AG04450 (cell line): ENCODE measurements at regions of chr1 and their contacts with region 1.

Region 1: DNA sequence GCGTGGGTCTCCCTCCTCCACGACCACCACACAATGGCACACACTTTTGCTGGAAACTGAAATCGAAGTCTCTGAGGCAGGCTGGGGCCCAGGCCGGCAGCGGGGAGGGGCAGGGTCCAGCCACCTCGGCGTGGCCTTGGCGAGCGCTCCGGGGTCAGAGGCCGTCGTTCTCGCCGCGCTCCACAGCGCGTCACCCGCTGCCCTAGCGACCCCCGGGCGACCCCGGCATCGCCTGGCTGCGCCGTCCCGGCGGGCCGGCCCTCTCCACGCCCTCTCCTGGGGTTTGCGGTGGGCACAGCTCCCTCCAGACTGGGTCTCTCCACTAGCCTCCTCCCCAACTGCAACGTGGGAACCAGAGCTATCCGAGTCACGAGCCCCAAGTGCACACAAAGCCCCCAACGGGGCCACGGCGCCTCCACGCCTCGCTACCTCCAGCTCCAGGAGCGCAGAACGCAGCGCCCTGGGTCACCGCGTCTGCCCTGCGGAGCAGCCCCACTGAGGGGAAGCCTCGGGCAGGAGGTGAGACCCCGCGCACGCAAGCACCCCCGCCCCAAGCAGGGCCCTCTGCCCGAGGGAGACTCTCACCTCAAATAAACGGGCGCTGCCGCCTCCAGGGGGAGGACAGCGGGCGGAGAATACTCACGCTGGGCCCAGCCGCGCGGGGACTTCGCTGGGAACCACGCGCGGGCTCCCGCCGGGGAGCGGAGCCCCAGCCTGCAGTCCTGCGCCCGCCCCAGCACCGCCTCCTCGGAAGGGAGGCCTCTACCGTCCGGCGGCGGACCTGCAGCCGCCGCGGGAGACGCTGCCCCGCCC is 134.0 kb upstream of the BARHL2 start:
- DNase-seq: peak; percentile 10
- H3K4me3 ChIP-seq: peak overlapping the region; percentile 68
- H3K27ac ChIP-seq: no peak overlapping the region
- H3K27me3 ChIP-seq: peaks cover 21% of the 10 kb centered on the region
- CTCF ChIP-seq: peak; percentile 53

Region 2: GRCh38 chr1:89166705-89167104 is 1684.4 kb before region 1 on chr1:
- CTCF ChIA-PET with region 1: interaction called, 11 read pairs
- POLR2A ChIA-PET with region 1: no interaction called
- DNase-seq: no peak
- H3K4me3 ChIP-seq: no peak overlapping the region
- H3K27ac ChIP-seq: no peak overlapping the region
- H3K27me3 ChIP-seq: no peaks in the 10 kb centered on the region
- CTCF ChIP-seq: no peak

Region 3: DNA sequence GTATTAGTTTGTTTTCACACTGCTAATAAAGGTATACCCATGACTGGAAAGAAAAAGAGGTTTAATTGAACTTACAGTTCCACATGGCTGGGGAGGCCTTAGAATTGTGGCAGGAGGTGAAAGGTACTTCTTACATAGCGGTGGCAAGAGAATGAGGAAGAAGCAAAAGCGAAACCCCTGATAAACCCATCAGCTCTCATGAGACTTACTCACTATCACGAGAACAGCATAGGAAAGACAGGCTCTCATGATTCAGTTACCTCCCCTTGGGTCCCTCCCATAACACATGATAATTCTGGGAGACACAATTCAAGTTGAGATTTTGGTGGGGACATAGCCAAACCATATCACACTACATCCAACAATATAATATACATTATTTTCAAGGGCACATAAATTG is 11.7 kb after region 1 on chr1:
- CTCF ChIA-PET with region 1: interaction called, 13 read pairs
- POLR2A ChIA-PET with region 1: no interaction called
- DNase-seq: no peak
- H3K4me3 ChIP-seq: no peak overlapping the region
- H3K27ac ChIP-seq: no peak overlapping the region
- H3K27me3 ChIP-seq: peaks cover 2% of the 10 kb centered on the region
- CTCF ChIP-seq: no peak